A673 (cell line): ENCODE measurements at regions of chr17 and their contacts with region 1.

Region 1: DNA sequence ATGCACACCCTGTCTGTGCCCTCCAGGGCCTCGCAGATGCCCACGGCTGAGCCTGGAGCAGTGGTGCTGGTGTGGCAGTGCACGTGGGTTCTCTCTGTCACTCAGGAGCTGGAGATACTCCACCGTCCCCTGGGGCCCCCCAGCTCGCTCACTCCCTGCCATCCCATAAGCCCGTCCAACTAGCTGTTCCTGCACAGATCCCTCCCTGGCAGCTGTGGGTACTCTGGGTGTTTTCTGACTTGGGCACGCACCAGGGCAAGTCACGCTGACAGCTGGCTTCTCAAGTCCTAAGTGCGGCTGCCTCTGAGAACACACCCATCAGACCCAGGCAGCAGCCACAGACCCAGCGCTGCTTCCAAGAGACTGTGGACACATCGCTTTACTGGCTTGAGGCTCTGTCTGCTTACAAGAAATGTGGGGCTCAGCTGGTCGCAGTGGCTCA is 25.4 kb upstream of the ITGB4 start:
- DNase-seq: no peak
- H3K4me3 ChIP-seq: no peak overlapping the region
- H3K27ac ChIP-seq: no peak overlapping the region
- H3K4me1 ChIP-seq: peaks cover 37% of the 10 kb centered on the region
- H3K27me3 ChIP-seq: no peaks in the 10 kb centered on the region
- CTCF ChIP-seq: no peak

Region 2: DNA sequence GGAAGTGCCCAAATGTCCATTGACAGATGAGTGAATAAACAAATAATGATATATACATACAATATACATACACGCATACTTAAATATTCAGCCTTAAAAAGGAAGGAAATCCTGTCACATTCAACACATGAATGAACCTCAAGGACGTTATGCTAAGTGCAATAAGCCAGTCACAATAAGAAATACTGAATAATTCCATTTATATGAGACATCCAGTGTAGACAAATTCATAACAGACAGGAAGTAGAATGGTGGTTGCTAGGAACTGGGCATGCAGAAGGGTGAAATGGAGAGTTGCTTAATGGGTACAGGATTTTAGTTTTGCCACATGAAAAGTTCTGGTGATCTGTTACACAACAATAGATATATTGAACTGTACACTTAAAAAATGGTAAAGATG is 16.6 kb after region 1 on chr17:
- CTCF ChIA-PET with region 1: no interaction called
- POLR2A ChIA-PET with region 1: interaction called, 14 read pairs
- intact Hi-C with region 1: no loop called
- DNase-seq: no peak
- H3K4me3 ChIP-seq: no peak overlapping the region
- H3K27ac ChIP-seq: no peak overlapping the region
- H3K4me1 ChIP-seq: no peaks in the 10 kb centered on the region
- H3K27me3 ChIP-seq: no peaks in the 10 kb centered on the region
- CTCF ChIP-seq: no peak